GM10248 (cell line): ENCODE measurements at regions of chr1 and their contacts with region 1.

Region 1: DNA sequence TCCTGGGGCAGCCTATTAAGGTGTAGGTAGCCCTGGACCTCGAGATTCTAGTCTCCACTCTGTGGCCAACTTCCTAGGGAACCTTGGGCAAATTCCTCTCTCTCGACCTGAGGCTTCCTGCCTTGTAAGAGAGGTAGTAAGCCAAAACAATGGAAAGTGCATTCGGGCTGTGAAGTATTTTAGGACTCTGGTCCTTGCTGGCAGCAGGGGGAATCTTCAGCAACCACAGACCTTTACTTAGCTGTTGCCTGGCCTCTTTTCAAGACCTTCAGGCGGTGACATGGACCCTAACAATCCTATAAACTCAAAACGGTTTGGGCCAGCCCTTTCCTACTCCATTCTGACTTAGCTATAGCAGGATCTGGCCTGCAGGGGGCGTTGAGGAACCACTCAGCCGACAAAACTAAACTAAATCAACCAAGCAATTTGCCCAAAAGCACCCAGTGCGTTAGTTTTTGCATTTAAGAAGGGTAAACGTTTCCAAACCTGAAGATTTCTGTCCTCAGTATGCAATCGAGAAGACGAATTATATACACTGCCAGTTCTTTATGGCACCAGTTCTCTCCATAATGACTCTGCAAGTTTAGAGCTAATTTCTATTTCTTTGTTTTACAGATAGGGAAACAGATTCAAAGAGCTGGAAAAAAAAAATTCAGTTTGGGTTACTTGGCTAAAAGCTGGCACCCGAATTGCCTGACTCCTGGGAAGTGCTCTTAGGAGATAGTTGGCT is 10.9 kb upstream of the SESN2 start:
- DNase-seq: peak; percentile 70
- CTCF ChIP-seq: peak; percentile 92

Region 2: DNA sequence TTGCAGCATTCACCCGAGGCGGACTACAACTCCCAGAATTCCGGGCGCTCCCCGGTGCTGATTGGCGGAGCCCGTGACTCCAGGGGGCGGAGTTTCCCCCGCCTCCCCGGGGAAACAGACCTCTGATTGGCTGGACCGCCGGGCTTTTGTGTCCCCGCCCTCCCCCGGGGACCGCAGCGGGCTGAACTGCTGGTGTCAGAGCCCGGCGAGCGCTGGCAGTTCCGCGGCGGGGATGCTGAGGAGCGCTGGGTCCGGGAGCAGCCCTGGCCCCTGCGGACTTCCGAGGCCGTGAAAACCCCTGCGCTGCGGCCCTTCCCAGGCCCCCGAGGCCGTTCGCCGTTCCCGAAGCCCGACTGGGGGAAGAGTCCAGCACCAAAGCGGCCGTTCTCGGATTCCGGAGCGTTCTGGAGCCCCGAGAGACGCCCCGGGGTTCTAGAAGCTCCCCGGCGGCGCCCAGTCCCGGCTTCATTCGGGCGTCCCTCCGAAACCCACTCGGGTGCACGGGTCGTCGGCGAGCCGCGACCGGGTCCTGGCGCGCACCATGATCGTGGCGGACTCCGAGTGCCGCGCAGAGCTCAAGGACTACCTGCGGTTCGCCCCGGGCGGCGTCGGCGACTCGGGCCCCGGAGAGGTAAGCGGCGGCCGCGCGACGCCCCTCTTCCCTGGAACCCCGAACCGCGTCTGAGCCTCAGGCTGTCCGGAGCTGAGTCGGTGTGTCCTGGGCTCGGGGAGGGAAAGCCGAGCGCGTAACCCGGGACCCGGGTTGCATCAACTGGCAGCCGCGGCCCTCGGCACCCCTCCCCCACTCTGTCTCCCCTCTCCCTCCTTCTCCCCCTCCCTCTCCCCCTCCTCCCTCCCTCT is 11.1 kb after region 1 on chr1 and contains the start of gene SESN2:
- CTCF ChIA-PET with region 1: interaction called, 111 read pairs
- POLR2A ChIA-PET with region 1: interaction called, 6 read pairs
- DNase-seq: peak; percentile 99
- CTCF ChIP-seq: no peak

Region 3: GRCh38 chr1:28273216-28273860 is 24.9 kb after region 1 on chr1:
- CTCF ChIA-PET with region 1: interaction called, 14 read pairs
- POLR2A ChIA-PET with region 1: no interaction called
- DNase-seq: no peak
- CTCF ChIP-seq: no peak

Region 4: GRCh38 chr1:28359592-28360239 is 111.3 kb after region 1 on chr1:
- CTCF ChIA-PET with region 1: interaction called, 22 read pairs
- POLR2A ChIA-PET with region 1: no interaction called
- DNase-seq: peak; percentile 69
- CTCF ChIP-seq: peak; percentile 57

Region 5: GRCh38 chr1:28602536-28603439 is 354.3 kb after region 1 on chr1:
- CTCF ChIA-PET with region 1: interaction called, 12 read pairs
- POLR2A ChIA-PET with region 1: no interaction called
- DNase-seq: peak; percentile 56
- CTCF ChIP-seq: peak; percentile 75